Heart right ventricle (tissue), 16 donors: ENCODE measurements at regions of chr6 and their contacts with region 1.

Region 1: DNA sequence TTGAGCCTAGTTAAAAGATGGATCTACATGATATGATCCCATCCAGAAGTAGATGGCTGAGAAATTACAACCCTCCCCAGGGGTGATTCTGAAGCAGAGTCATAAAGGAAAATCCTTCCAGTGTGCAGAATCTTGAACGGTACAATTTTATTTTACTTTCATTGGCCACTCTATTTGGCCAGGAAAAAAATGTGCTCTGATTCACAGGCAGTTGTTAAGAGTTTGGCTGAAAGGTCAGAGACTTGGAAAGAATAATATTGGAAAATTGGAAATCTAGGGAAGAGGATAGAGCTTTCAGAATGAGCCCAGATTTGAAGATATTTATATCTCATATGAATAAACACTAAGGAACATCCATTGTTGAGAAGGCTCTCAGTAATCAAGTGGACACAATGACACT is 1299.3 kb upstream of the GJE1 start:
- DNase-seq: no peak
- ATAC-seq: peak in 1 of 8 donors; percentile 51
- H3K4me3 ChIP-seq: no peak overlapping the region
- H3K27ac ChIP-seq: peak overlapping the region in 1 of 10 donors; percentile 49
- H3K4me1 ChIP-seq: no peaks in the 10 kb centered on the region
- H3K27me3 ChIP-seq: no peaks in the 10 kb centered on the region
- CTCF ChIP-seq: no peak

Region 2: DNA sequence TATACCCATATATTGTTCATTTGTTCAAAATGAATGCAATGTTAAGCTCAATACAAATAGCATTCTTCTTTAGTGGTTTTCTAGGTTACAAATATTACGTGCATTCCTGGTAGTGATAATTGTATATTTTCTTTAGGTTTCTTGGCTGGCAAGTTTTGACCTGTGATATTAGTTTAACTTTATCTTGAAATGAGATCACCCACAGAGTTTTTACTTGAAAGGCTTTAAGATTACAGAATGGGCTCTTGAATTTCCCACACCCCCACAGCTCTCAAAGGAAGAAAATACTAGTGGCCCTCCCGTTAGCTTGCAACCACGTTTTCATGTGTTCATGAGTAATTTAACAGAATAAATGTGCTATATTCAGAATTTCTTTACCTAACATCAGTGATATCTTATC is 16.2 kb before region 1 on chr6:
- intact Hi-C with region 1: loop called in 1 of 10 experiments (anchors 2 kb)
- DNase-seq: no peak
- ATAC-seq: no peak
- H3K4me3 ChIP-seq: no peak overlapping the region
- H3K27ac ChIP-seq: no peak overlapping the region
- H3K4me1 ChIP-seq: no peaks in the 10 kb centered on the region
- H3K27me3 ChIP-seq: no peaks in the 10 kb centered on the region
- CTCF ChIP-seq: no peak